ENCODE measurements at regions of chr4 and their contacts with region 1.

Region 1: DNA sequence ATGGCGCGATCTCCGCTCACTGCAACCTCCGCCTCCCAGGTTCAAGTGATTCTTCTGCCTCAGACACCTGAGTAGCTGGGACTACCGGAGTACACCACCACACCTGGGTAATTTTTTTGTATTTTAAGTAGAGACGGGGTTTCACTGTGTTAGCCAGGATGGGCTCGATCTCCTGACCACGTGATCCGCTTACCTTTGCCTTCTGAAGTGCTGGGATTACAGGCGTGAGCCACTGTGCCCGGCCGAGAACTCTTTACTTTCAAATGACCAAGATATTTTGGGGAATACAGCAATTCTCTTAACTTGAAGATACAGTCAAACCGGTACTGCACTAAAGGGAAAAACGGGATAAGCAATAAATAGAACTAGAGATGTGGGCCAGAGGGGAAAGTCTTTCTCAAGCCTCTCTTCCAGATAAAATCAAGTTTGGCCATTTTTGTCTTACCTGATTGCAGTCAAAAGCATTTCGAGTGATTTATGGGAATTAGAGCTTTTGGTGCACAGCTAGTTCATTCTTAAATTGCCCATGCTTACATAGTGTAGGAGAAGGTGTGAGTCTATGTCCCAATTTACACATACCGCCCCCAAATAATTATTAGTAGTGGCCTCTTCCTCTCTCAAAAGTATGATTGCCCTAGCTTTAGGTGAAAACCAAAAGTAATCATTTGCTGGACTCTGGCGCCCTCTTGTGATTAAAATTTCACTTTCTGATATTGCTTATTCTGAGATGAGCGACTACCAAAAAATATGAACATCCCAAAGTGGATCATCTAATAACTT is 53.2 kb upstream of the ABCG2 start:
- DNase-seq: peak; percentile 45
- H3K4me3 ChIP-seq: no peak overlapping the region; a peak in 1 of 4 replicates
- H3K27ac ChIP-seq: no peak overlapping the region
- H3K4me1 ChIP-seq: no peaks in the 10 kb centered on the region
- H3K27me3 ChIP-seq: no peaks in the 10 kb centered on the region; the same call in 1 of the 2 replicates
- CTCF ChIP-seq: peak; percentile 79
- EP300 ChIP-seq: no peak
- RAD21 ChIP-seq: peak; percentile 96

Region 2: DNA sequence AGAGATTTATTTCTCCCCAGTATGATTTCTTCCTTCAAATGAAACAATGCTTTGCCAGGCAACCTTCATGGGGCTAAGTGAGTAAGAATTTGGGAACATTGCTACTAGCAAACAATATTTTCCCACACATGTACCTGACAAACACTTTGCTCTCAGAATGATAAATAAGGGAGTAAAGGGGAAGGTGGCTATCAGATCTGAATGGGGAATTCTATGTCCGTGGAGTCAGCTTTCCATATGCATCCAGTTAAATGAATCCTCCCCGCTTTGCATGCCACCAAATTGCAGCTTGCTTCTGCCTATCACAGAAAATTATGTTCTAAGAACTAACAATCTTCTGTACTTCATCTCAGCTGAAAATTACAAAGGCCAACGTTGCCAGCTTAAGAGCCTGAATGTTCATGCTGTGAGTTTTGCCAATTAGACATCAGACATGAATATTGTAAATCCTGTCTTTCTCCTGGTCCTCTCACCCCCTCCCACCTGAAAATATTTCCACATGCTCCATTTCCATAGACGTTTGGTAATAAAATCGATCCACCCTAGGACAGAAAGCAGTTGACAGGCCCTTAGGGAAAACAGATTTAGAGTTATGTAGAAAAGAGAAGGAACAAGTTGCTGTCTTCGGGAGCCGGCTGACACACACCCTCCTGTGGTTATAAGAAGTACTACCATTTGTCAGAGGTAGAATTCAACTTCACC is 372.6 kb before region 1 on chr4:
- CTCF ChIA-PET with region 1: interaction called, 10 read pairs
- POLR2A ChIA-PET with region 1: no interaction called
- DNase-seq: no peak
- H3K4me3 ChIP-seq: no peak overlapping the region
- H3K27ac ChIP-seq: no peak overlapping the region
- H3K4me1 ChIP-seq: peaks cover 0 to 9% of the 10 kb centered on the region in 2 experiments; a peak in 1 of 4 replicates
- H3K27me3 ChIP-seq: no peaks in the 10 kb centered on the region
- CTCF ChIP-seq: peak; percentile 75
- EP300 ChIP-seq: no peak
- RAD21 ChIP-seq: peak; percentile 76

Region 3: DNA sequence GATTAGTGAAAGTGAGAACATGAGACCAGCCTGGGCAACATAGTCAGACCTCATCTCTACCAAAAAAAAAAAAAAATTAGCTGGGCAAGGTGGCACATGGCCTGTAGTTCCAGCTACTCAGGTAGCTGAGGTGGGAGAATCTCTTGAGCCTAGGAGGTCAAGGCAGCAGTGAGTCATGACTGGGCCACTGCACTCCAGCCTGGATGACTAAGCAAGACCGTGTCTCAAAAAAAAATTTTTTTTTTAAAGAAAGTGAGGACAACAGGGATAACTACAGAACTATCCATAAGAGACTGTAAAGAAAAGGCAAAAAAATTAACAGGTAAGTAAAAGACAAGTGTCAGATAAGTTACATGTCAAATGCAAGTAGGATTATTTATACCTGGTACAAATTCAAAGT is 249.7 kb before region 1 on chr4:
- CTCF ChIA-PET with region 1: interaction called, 11 read pairs
- POLR2A ChIA-PET with region 1: no interaction called
- DNase-seq: no peak
- H3K4me3 ChIP-seq: no peak overlapping the region
- H3K27ac ChIP-seq: no peak overlapping the region
- H3K4me1 ChIP-seq: no peaks in the 10 kb centered on the region
- H3K27me3 ChIP-seq: no peaks in the 10 kb centered on the region
- CTCF ChIP-seq: no peak
- EP300 ChIP-seq: no peak
- RAD21 ChIP-seq: no peak

Region 4: DNA sequence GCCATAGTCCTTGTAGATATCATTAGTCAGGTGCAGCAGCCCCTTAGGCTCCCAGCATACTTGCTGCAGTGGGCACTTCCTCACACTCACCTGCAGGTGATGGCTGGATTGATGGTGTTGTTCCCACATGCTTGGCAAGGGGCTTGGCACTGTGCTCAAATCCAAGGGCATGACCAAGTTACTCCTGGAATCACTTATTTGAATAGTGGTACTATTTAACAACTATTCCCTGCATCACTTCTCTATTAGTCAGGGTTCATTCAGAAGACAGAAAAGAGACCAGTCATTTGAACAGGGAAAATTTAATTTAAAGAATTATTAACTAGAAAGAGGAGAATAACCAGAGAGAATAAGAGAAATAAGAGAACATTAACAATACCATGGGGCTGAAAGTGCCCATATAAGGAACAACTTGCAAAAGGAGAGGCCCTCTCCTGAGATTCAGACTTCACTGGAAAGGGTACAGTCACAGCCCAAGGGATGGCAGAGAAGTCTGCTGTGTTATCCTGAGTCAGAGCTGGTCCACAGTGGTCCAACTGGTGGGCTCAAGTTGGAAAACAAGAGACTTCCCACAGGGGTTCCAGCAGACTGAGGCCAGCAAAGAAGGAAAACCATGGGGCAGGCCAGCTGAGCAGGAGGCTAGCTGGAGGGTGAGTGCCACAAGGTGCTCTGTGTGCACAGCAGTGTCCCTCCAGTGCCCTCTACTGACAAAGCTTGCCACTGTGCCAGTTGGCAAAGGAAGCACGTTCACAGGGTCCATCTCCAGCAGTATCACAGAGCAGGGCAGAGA is 226.4 kb before region 1 on chr4:
- CTCF ChIA-PET with region 1: interaction called, 19 read pairs
- POLR2A ChIA-PET with region 1: no interaction called
- DNase-seq: peak; percentile 67
- H3K4me3 ChIP-seq: no peak overlapping the region
- H3K27ac ChIP-seq: no peak overlapping the region
- H3K4me1 ChIP-seq: no peaks in the 10 kb centered on the region
- H3K27me3 ChIP-seq: no peaks in the 10 kb centered on the region
- CTCF ChIP-seq: peak; percentile 64
- EP300 ChIP-seq: no peak
- RAD21 ChIP-seq: peak; percentile 81

Region 5: GRCh38 chr4:88054901-88055300 is 156.8 kb before region 1 on chr4:
- CTCF ChIA-PET with region 1: interaction called, 17 read pairs
- POLR2A ChIA-PET with region 1: no interaction called
- DNase-seq: peak; percentile 20
- H3K4me3 ChIP-seq: no peak overlapping the region
- H3K27ac ChIP-seq: no peak overlapping the region
- H3K4me1 ChIP-seq: no peaks in the 10 kb centered on the region
- H3K27me3 ChIP-seq: no peaks in the 10 kb centered on the region
- CTCF ChIP-seq: peak; percentile 59
- EP300 ChIP-seq: no peak
- RAD21 ChIP-seq: peak; percentile 68

Region 6: GRCh38 chr4:88196013-88196365 is 15.7 kb before region 1 on chr4:
- CTCF ChIA-PET with region 1: interaction called, 19 read pairs
- POLR2A ChIA-PET with region 1: no interaction called
- DNase-seq: no peak
- H3K4me3 ChIP-seq: no peak overlapping the region
- H3K27ac ChIP-seq: no peak overlapping the region
- H3K4me1 ChIP-seq: no peaks in the 10 kb centered on the region; a peak in 1 of 4 replicates
- H3K27me3 ChIP-seq: no peaks in the 10 kb centered on the region
- CTCF ChIP-seq: no peak
- EP300 ChIP-seq: no peak
- RAD21 ChIP-seq: no peak

Region 7: DNA sequence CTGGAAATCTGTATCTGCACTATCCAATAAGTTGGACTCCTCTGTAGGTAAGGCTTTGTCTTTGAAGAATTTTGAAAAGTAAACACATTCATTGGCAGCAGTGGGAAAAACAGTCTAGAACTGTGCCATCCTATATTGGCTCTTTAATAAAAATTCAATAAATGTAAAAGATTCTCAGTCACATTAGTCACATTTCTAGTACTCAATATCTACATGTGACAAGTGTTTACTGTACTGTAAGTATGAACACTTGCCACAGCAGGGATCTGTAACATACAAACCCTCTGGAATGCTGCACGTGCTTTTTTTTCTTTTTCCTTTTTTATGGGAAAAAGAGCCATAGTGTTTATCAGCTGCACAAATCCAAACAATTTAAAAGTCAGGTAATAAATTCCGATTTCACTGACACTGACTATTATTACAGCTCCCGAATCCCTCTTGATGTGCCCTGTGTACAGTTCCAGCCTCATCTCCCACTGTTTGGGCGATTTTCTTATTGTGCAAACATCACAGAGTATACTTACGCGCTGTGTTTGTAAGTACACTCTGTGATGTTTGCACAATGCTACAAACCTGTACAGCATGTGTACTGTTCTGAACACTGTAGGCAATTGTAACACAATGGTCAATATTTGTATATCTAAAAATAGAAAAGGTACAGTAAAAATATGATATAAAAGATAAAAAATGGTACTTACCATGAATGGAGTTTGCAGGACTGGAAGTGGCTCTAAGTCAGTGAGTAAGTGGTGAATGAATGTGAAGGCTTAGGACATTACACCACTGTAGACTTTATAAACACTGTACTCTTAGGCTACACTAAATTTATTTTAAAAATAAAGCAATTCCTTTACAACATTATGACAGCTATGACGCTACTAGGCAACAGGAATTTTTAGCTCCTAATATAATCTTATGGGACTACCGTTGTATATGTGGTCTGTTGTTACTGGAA is 303.2 kb after region 1 on chr4:
- CTCF ChIA-PET with region 1: interaction called, 93 read pairs
- POLR2A ChIA-PET with region 1: no interaction called
- DNase-seq: no peak
- H3K4me3 ChIP-seq: no peak overlapping the region
- H3K27ac ChIP-seq: no peak overlapping the region
- H3K4me1 ChIP-seq: no peaks in the 10 kb centered on the region; a peak in 1 of 4 replicates
- H3K27me3 ChIP-seq: no peaks in the 10 kb centered on the region
- CTCF ChIP-seq: no peak
- EP300 ChIP-seq: no peak
- RAD21 ChIP-seq: no peak